ENCODE measurements at regions of chr19 and their contacts with region 1.

Region 1: DNA sequence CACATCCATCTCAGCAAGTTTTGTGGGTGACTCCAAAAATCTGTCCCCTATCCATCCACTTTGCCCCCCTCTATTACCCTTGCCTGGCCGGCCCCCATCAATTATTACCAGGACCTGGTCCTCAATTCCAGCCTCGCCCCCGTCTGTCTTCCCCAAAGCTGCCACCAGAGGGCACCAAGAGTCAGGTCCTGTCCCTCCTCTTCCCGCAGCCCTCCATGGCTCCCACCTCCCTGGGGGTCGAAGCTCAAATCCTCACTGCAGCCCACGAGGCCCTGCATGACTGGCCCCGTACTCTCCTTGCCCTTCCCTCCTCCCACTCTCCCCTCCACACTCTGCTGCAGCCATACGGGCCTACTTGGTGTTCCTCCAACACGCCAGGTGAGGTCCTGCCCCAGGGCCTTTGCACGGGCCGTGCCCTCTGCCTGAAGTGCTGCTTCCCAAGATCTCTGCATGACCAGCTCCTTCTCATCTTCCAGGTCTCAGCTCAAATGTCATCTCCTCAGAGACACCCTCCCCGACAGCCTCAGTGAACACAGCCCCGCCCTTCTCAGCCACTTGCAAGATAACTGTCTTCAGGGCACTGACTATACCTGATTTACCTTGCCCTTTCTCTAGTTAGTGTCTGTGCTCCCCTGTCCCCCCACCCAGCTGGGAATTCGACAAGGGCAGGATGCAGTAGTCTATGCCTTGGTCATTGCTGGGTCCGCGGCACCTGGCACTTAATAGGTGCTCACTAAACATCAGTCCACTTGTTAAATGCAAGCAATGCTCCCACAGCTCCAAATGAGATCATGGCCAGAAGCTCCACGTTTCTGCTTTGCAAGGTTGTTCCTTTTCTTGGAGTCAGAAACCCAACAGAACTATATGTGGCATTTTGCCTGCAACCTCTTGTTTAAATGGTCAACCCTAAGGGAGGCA is 16.8 kb upstream of the SEMA6B start:
- DNase-seq: no peak
- H3K4me3 ChIP-seq: no peak overlapping the region
- CTCF ChIP-seq: peak; percentile 79

Region 2: GRCh38 chr19:4457654-4458395 is 118.5 kb before region 1 on chr19 and contains the start of gene UBXN6:
- CTCF ChIA-PET with region 1: no interaction called
- POLR2A ChIA-PET with region 1: no interaction called
- DNase-seq: peak; percentile 93
- H3K4me3 ChIP-seq: peak within 1 kb of the TSS; percentile 91
- CTCF ChIP-seq: no peak

Region 3: GRCh38 chr19:4557971-4558941 is 18.0 kb before region 1 on chr19:
- CTCF ChIA-PET with region 1: interaction called, 27 read pairs
- POLR2A ChIA-PET with region 1: no interaction called
- DNase-seq: no peak
- H3K4me3 ChIP-seq: no peak overlapping the region
- CTCF ChIP-seq: peak; percentile 94

Region 4: GRCh38 chr19:4589579-4590410 is 13.5 kb after region 1 on chr19:
- CTCF ChIA-PET with region 1: interaction called, 16 read pairs
- POLR2A ChIA-PET with region 1: no interaction called
- DNase-seq: no peak
- H3K4me3 ChIP-seq: no peak overlapping the region
- CTCF ChIP-seq: peak; percentile 60

Region 5: DNA sequence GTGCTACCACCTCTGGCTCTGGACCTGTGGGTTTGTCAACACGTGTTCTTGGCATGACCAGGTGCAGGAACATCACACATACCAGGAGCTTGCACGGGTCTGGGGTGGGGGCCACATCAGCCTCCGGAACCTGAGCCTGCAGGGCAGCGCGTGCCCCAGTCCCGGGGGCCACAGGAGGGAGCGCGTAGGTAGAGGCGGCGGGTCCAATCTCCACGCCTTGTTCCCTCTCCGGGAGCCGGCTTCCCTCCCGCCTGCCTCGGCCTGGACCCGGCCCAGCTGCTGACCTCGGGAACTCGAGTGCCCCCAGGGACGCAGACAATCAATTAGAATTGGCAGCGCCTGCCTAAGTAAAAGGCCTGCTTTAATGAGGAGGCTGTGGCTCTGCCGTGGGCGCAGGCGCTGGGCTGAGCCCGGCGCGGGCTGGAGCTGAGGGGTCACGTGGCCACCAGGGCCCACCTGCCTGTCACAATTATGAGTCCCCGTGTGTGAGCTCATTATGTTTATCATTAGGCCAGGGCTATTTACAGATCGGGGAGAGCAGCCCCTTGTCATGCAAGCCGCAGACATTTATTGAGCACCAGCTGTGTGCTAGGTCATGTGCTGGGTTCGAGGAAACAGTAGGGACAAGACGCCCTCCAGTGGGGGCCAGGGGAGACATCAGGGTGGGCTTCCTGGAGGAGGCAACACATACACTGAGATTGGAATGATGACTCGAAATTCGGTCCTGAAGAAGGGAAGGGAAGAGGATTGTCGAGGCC is 30.8 kb after region 1 on chr19:
- CTCF ChIA-PET with region 1: interaction called, 14 read pairs
- POLR2A ChIA-PET with region 1: no interaction called
- DNase-seq: no peak
- H3K4me3 ChIP-seq: no peak overlapping the region
- CTCF ChIP-seq: no peak

Measured in AG04449 (cell line).